Activated CD4-positive, alpha-beta memory T cell treated with anti-CD3 and anti-CD28 coated beads, Interleukin-2, amount 10 ng/mL, durations not matched to agents 7 days and 5 days (primary cell): ENCODE measurements at regions of chr20 and their contacts with region 1.

Region 1: GRCh38 chr20:59940174-59940971 is at the starts of genes FAM217B and PPP1R3D:
- DNase-seq: peak; percentile 94
- H3K4me3 Mint-ChIP-seq: peak within 1 kb of the TSS; percentile 89
- H3K27ac Mint-ChIP-seq: peak within 1 kb of the TSS; percentile 97
- H3K4me1 Mint-ChIP-seq: peaks cover 35% of the 10 kb centered on the region
- H3K27me3 Mint-ChIP-seq: no peaks in the 10 kb centered on the region
- total RNA-seq, gene FAM217B: 26.5 to 27.4 TPM
- total RNA-seq, gene PPP1R3D: 9.7 to 10.3 TPM

Region 2: DNA sequence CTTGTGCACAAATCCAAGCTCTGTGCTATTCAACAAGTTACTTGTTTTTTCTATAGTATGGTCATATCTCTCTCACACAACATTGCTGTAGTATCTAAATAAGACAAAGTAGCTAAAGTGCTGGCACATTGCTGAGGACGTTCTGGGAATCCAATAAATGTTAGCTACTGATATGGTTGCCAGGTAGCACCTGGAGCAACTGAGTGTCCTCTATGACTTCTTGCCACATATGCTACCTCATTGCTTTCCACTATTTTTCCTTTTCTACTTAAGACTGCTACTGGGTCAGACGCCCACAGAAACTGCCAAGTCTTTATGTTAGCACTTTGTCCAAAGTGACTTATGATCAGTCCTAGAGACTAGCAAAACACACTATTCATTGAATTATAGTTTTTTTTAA is 92.2 kb before region 1 on chr20:
- CTCF ChIA-PET with region 1: no interaction called
- POLR2A ChIA-PET with region 1: no interaction called
- DNase-seq: no peak
- H3K4me3 Mint-ChIP-seq: no peak overlapping the region
- H3K27ac Mint-ChIP-seq: no peak overlapping the region
- H3K4me1 Mint-ChIP-seq: no peaks in the 10 kb centered on the region
- H3K27me3 Mint-ChIP-seq: peaks cover 4% of the 10 kb centered on the region

Region 3: GRCh38 chr20:59955132-59955796 is 14.9 kb after region 1 on chr20:
- CTCF ChIA-PET with region 1: interaction called, 39 read pairs
- POLR2A ChIA-PET with region 1: interaction called, 11 read pairs
- DNase-seq: no peak
- H3K4me3 Mint-ChIP-seq: no peak overlapping the region
- H3K27ac Mint-ChIP-seq: no peak overlapping the region
- H3K4me1 Mint-ChIP-seq: no peaks in the 10 kb centered on the region
- H3K27me3 Mint-ChIP-seq: no peaks in the 10 kb centered on the region

Region 4: GRCh38 chr20:60024801-60025200 is 84.4 kb after region 1 on chr20:
- CTCF ChIA-PET with region 1: no interaction called
- POLR2A ChIA-PET with region 1: no interaction called
- DNase-seq: no peak
- H3K4me3 Mint-ChIP-seq: no peak overlapping the region
- H3K27ac Mint-ChIP-seq: no peak overlapping the region
- H3K4me1 Mint-ChIP-seq: peaks cover 2% of the 10 kb centered on the region
- H3K27me3 Mint-ChIP-seq: no peaks in the 10 kb centered on the region